PC-9 (cell line): ENCODE measurements at regions of chr18 and their contacts with region 1.

Region 1: DNA sequence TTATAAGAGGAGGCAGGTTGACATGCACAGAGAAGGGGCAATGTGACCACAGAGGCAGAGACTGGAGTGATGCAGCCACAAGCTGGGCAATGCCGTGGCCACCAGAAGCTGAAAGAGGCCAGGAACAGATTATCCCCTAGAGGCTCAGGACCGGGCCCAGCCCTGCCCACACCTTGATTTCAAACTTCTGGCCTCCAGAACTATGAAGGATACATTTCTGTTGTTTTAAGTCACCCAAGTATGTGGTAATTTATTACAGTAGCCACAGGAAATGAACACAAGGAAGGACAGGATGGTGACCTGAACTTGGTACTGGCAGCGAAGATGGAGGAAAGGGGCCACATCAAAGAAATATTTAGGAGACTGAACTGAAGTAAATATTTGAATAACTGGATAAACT is 66.8 kb upstream of the RIOK3 start:
- DNase-seq: peak; percentile 38 to 90
- H3K4me3 ChIP-seq: no peak overlapping the region
- H3K27ac ChIP-seq: peak overlapping the region; percentile 58
- H3K4me1 ChIP-seq: peaks cover 30% of the 10 kb centered on the region
- H3K27me3 ChIP-seq: no peaks in the 10 kb centered on the region
- CTCF ChIP-seq: no peak

Region 2: DNA sequence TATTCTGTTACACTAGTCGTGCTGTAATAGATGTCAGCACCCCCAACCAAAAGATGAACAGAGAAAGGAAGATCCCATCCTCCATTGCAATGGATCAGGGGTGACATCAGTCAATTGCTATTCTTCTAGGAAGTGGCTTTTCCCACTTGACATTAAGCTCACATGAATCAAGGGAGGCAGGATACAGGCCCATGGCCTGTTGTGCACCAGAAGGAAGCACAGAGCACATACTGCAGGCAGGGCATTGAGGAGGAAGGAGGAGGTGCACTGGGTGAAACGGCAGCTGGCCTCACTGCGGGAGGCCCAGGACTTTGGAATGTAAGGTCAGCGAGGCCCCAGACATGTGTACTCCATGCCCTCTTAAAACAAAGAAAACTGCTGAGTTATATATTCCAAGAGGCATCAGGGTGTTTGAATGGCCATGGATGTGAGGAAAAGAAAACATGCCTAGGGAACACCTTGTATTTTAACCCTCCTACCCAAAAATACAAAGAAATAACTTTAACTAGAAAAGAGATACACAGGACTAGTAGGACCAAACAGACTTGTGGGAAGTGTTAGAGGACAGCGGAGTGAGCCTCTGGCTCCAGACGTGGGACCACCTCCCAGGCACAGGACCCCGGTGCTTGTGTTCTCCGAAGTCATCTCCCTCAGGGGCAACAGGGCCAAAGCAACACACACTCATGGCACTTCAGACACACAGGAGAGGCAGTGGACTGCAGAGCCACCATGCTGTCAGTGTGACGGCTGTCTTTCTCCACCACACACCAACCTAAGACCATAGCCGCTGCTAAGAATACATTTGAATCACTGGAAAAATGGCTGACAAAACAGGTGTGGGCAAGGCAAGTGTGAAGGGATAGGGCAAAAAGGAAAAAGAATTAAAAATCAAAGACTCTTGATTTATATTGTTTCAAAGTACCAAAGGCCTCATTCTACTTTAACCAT is 15.4 kb after region 1 on chr18:
- CTCF ChIA-PET with region 1: no interaction called
- POLR2A ChIA-PET with region 1: no interaction called
- intact Hi-C with region 1: loop called (anchors 2 kb)
- DNase-seq: peak; percentile 63 to 83
- H3K4me3 ChIP-seq: no peak overlapping the region
- H3K27ac ChIP-seq: peak overlapping the region; percentile 55
- H3K4me1 ChIP-seq: peaks cover 49% of the 10 kb centered on the region
- H3K27me3 ChIP-seq: no peaks in the 10 kb centered on the region
- CTCF ChIP-seq: no peak